ENCODE measurements at regions of chr1 and their contacts with region 1.

Region 1: DNA sequence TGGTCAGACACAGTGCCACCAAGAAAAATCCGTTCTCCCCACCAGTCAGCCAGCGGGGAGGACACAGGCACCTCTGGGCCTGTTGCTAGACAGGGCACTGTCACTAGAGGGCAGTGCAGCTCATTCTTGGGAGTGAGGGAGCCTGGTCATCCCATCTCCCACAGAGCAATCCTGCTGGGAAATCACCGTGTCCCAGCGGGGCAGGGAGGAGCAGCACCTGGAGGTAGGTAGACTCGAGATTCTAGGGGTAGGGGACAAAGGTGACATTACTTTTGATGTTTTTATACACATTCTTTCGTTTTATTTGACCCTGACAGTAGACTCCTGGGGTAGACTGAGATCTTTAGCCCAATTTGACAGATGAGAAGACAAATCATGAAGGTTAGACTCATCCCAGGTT is 6.7 kb upstream of the CAMK1G start:
- DNase-seq: peak; percentile 90
- ATAC-seq: peak; percentile 98
- H3K4me3 Mint-ChIP-seq: no peak overlapping the region
- H3K27ac Mint-ChIP-seq: no peak overlapping the region
- H3K4me1 Mint-ChIP-seq: peaks cover 10% of the 10 kb centered on the region
- H3K27me3 Mint-ChIP-seq: peaks cover 2% of the 10 kb centered on the region; the same call in 1 of the 2 replicates
- CTCF ChIP-seq: peak; percentile 93

Region 2: DNA sequence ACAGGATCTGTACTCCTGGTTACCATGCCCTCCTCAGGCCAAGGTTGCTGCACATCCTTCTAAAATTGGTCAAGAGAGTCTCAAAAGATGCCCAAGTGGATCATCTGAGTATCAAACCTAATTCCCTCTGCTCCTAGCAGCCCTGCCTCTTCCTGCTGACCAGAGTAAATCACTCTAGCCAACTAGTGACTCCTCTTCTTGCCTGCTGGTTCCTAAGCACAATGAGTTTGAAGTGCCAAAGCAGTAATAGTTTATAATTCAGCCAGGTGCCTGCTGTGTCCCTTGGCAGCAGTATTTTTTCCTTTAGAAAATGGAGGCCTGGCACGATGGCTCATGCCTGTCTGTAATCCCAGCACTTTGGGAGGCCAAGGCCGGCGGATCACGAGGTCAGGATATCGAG is 131.2 kb before region 1 on chr1:
- CTCF ChIA-PET with region 1: no interaction called
- POLR2A ChIA-PET with region 1: no interaction called
- DNase-seq: no peak
- ATAC-seq: no peak
- H3K4me3 Mint-ChIP-seq: no peak overlapping the region
- H3K27ac Mint-ChIP-seq: no peak overlapping the region
- H3K4me1 Mint-ChIP-seq: peaks cover 36% of the 10 kb centered on the region
- H3K27me3 Mint-ChIP-seq: no peaks in the 10 kb centered on the region; the same call in 1 of the 2 replicates
- CTCF ChIP-seq: no peak

Region 3: GRCh38 chr1:209595599-209596285 is 18.9 kb after region 1 on chr1:
- CTCF ChIA-PET with region 1: interaction called, 28 read pairs
- POLR2A ChIA-PET with region 1: no interaction called
- DNase-seq: no peak
- ATAC-seq: peak; percentile 51; the same call in 1 of the 2 replicates
- H3K4me3 Mint-ChIP-seq: no peak overlapping the region
- H3K27ac Mint-ChIP-seq: no peak overlapping the region
- H3K4me1 Mint-ChIP-seq: no peaks in the 10 kb centered on the region
- H3K27me3 Mint-ChIP-seq: no peaks in the 10 kb centered on the region
- CTCF ChIP-seq: no peak

Region 4: GRCh38 chr1:209601809-209602657 is 25.2 kb after region 1 on chr1:
- CTCF ChIA-PET with region 1: interaction called, 11 read pairs
- POLR2A ChIA-PET with region 1: no interaction called
- DNase-seq: peak; percentile 37
- ATAC-seq: peak; percentile 97
- H3K4me3 Mint-ChIP-seq: no peak overlapping the region
- H3K27ac Mint-ChIP-seq: no peak overlapping the region
- H3K4me1 Mint-ChIP-seq: no peaks in the 10 kb centered on the region
- H3K27me3 Mint-ChIP-seq: no peaks in the 10 kb centered on the region
- CTCF ChIP-seq: peak; percentile 14; the same call in 1 of the 2 replicates

Region 5: GRCh38 chr1:209607102-209607794 is 30.4 kb after region 1 on chr1:
- CTCF ChIA-PET with region 1: interaction called, 13 read pairs
- POLR2A ChIA-PET with region 1: no interaction called
- DNase-seq: no peak
- ATAC-seq: no peak
- H3K4me3 Mint-ChIP-seq: no peak overlapping the region
- H3K27ac Mint-ChIP-seq: no peak overlapping the region
- H3K4me1 Mint-ChIP-seq: no peaks in the 10 kb centered on the region
- H3K27me3 Mint-ChIP-seq: no peaks in the 10 kb centered on the region
- CTCF ChIP-seq: no peak

Region 6: GRCh38 chr1:209651148-209651547 is 74.3 kb after region 1 on chr1:
- CTCF ChIA-PET with region 1: interaction called, 10 read pairs
- POLR2A ChIA-PET with region 1: no interaction called
- DNase-seq: no peak
- ATAC-seq: no peak
- H3K4me3 Mint-ChIP-seq: no peak overlapping the region
- H3K27ac Mint-ChIP-seq: peak overlapping the region; percentile 71; the same call in 1 of the 2 replicates
- H3K4me1 Mint-ChIP-seq: peaks cover 29% of the 10 kb centered on the region
- H3K27me3 Mint-ChIP-seq: peaks cover 2% of the 10 kb centered on the region; the same call in 1 of the 2 replicates
- CTCF ChIP-seq: no peak

Region 7: DNA sequence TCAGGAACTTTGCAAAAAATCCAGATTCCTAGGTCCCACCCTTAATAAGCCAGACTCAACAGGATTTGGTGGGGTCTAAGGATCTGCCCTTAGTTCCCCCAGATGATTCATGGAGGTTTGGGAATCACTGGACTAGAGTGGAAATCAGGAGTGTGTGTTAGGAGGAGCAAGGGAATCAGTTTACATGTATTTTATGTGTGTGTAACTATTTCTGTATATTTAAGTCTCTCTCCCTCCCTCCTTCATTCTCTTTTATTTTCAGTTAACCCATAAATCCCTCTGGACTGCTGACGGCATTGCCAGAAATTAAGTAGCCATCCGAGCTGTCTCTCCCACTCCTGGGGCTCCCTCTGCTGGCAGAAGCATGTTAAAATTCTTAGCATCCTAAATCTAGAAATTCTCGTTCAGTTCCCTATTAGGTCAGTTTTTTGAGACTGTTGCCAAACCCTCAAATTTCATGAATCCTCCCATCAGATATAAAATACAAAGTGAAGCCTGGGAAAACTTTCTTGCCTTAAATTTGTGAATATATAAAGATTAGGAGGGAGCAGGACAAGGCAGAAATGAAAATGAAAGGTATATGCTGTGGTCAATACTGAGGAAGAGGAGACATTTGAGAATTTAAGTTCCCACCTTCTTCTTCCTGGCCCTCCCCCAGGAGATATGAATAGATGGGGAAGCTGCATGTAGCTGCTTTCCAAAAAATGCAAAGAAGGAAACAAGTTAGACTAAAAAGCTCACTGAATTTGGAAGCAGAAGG is 116.1 kb after region 1 on chr1:
- CTCF ChIA-PET with region 1: interaction called, 12 read pairs
- POLR2A ChIA-PET with region 1: no interaction called
- DNase-seq: peak; percentile 79
- ATAC-seq: peak; percentile 76
- H3K4me3 Mint-ChIP-seq: no peak overlapping the region
- H3K27ac Mint-ChIP-seq: no peak overlapping the region
- H3K4me1 Mint-ChIP-seq: peaks cover 4% of the 10 kb centered on the region
- H3K27me3 Mint-ChIP-seq: peaks cover 16% of the 10 kb centered on the region
- CTCF ChIP-seq: no peak; the same call in 1 of the 2 replicates

Region 8: GRCh38 chr1:209747580-209748262 is 170.9 kb after region 1 on chr1:
- CTCF ChIA-PET with region 1: interaction called, 13 read pairs
- POLR2A ChIA-PET with region 1: no interaction called
- DNase-seq: peak; percentile 99
- ATAC-seq: peak; percentile 99
- H3K4me3 Mint-ChIP-seq: peak overlapping the region; percentile 51
- H3K27ac Mint-ChIP-seq: no peak overlapping the region
- H3K4me1 Mint-ChIP-seq: peaks cover 10% of the 10 kb centered on the region
- H3K27me3 Mint-ChIP-seq: peaks cover 23% of the 10 kb centered on the region
- CTCF ChIP-seq: peak; percentile 96

Measured in WTC11 (cell line).